G401 (cell line): ENCODE measurements at regions of chr1 and their contacts with region 1.

Region 1: GRCh38 chr1:46179138-46180081 is 3.1 kb upstream of the P3R3URF start:
- DNase-seq: peak; percentile 95

Region 2: DNA sequence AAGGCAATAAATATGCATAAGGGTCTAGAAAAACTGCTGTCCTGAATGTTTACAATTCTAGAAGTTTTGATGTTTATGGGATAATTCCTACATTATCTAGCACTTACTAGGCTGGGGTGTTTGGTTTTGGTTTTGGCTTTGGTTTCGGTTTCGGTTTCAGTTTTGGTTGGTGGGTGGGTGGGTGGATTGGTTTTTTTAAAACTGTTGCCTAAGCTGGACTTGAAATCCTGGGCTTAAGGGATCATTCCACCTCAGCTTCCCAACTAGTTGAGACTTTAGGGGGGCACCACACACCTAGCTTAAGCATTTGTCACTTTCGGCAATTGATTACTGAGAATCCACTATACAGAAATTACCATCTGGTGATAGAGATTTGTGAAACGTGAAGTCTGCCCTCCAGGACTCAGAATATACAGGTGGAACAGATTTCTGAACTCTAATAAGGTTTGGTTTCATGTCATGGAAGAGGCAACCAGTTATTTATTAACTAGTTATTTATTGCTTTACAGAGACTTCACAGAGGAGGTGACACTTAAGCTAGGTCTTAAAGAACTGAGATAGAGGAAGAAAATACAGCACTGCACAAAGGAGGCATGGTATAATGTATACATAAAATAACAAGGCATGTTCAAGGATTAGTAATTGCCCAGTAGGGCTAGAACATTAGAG is 116.6 kb before region 1 on chr1:
- in situ Hi-C with region 1: loop called (anchors 10 kb)
- DNase-seq: no peak